ENCODE measurements at regions of chr17 and their contacts with region 1.

Region 1: DNA sequence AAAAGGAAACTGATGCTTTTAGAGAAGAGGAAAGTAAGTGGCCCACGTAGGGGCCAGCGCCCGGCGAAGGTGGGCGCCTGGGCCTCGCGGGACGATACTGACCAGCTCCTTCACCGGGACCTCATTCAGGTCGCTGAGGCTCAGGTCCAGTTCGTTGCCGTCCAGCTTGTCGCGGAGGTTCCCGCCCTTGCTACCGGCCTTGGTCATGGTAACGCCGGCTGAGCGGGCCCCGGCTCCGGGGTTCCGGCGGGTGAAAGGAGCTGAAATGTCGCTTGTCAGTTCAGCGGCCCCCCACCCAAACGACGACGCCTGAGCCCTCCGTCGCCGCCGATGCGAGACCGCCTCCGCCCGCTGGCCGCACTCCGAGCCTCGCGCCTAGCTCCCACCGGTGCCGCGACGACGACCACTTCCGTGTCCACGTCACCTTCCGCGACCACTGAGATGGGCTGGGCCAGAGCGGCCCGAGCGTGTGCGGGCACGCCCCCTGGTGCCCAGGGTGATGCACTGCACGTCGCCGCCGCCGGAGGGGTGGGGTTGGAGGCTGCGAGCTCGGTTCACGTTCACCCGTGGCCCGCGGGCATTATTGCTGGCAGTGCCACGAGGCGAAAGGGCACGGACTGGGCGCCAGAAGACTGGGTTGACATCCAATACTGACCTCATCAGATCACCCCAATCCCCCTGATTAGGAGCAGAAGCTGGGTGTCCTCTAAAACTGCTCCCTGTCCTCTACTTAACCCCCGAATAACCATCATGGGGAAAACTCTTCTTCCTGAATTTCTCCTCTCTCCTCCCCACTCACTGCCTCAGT is at the start of gene LRRC59:
- DNase-seq: peak; percentile 93
- H3K4me3 Mint-ChIP-seq: peak within 1 kb of the TSS; percentile 82
- H3K27ac Mint-ChIP-seq: peak within 1 kb of the TSS; percentile 88
- H3K4me1 Mint-ChIP-seq: peaks cover 30% of the 10 kb centered on the region
- H3K27me3 Mint-ChIP-seq: no peaks in the 10 kb centered on the region
- total RNA-seq, gene LRRC59: 67.1 to 68.9 TPM

Region 2: GRCh38 chr17:50200457-50201275 is 196.6 kb before region 1 on chr17:
- CTCF ChIA-PET with region 1: interaction called, 13 read pairs
- POLR2A ChIA-PET with region 1: no interaction called
- DNase-seq: peak; percentile 87
- H3K4me3 Mint-ChIP-seq: peak overlapping the region; percentile 67
- H3K27ac Mint-ChIP-seq: no peak overlapping the region
- H3K4me1 Mint-ChIP-seq: peaks cover 20% of the 10 kb centered on the region
- H3K27me3 Mint-ChIP-seq: peaks cover 60% of the 10 kb centered on the region

Region 3: GRCh38 chr17:50269477-50270434 is 127.6 kb before region 1 on chr17:
- CTCF ChIA-PET with region 1: no interaction called
- POLR2A ChIA-PET with region 1: no interaction called
- DNase-seq: peak; percentile 76
- H3K4me3 Mint-ChIP-seq: no peak overlapping the region
- H3K27ac Mint-ChIP-seq: no peak overlapping the region
- H3K4me1 Mint-ChIP-seq: peaks cover 18% of the 10 kb centered on the region
- H3K27me3 Mint-ChIP-seq: peaks cover 9% of the 10 kb centered on the region

Region 4: DNA sequence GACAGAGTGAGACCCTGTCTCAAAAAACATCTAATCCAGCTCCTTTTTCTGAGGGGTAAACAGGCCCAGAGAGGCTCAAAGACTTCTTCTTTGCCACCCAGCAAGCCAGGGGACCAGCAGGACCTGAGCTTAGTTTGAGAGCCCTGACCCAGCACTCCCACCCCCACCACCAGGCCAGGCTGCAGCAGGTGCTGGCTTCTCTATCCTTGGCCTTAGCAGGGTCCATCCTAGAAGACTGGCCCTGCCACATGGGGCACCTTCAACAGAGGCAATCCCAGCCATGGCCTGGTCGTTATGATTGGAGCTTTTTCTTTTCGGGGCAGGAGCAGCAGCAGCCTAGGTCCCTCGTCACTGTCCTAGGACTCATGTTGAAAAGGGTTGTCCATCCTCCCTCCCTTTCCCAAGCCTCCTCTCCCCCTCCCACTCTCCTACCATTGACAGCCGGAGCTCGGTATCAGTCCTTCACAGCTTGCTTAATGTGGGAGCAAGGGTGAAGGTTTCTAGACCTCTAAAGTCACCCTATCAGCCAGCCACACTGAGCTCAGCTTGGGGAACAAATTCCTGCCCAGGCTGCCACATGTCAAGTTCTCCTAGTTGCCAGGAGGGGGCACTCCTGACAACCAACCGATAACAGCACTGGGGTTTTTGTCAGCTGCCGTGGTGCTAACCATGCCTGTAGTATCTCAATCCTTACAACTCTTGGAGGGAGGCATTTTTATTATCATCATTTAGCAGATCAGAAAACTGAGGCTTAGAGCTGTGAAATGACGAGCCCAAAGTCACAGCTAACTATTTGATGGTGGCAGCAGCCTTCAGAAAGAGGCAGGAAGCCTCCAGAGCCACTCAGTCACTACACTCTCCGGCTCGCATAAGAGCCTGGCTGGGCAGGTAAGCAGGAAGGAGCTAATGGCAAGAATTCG is 35.5 kb before region 1 on chr17:
- CTCF ChIA-PET with region 1: interaction called, 75 read pairs
- POLR2A ChIA-PET with region 1: interaction called, 142 read pairs
- DNase-seq: peak; percentile 65
- H3K4me3 Mint-ChIP-seq: no peak overlapping the region
- H3K27ac Mint-ChIP-seq: peak overlapping the region; percentile 55
- H3K4me1 Mint-ChIP-seq: peaks cover 7% of the 10 kb centered on the region
- H3K27me3 Mint-ChIP-seq: no peaks in the 10 kb centered on the region

Region 5: DNA sequence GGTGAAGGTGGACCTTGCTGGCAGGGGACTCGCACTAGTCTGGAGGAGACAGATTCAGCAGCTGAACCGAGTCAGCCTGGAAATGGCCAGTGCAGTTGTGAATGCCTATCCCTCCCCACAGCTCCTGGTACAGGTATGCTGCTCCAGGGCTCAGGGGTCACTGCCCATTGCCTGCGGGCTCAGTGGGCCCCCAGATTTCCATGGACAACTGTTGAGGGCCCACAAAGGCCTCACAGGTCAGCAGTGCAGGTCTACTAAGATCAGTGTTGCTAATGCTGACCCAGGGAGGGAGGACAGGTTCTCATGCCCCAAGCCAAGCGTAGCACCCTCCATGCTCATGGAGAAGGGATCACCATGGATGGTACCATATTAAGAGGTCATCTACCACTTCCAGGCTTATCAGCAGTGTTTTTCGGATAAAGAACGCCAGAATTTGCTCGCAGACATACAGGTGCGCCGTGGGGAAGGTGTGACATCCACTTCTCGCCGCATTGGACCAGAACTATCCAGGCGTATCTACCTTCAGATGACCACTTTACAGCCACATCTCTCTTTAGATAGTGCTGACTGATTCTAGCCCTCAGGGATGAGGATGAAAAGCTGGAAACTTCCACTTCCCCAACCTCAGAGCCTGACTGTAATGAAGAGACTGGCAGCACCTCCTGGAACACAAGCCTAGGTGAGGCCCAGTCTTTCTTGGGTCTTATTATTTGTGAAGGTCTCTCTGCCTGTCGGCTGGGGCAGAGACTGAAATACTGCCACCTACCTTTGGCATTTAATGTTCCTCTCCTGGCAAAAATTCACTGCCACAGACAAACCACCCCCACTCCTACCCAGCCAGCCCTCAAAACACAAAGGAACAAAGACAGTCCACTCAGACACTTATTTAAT is 16.7 kb before region 1 on chr17:
- CTCF ChIA-PET with region 1: interaction called, 37 read pairs
- POLR2A ChIA-PET with region 1: interaction called, 142 read pairs
- DNase-seq: no peak
- H3K4me3 Mint-ChIP-seq: no peak overlapping the region
- H3K27ac Mint-ChIP-seq: no peak overlapping the region
- H3K4me1 Mint-ChIP-seq: peaks cover 3% of the 10 kb centered on the region
- H3K27me3 Mint-ChIP-seq: no peaks in the 10 kb centered on the region

Region 6: DNA sequence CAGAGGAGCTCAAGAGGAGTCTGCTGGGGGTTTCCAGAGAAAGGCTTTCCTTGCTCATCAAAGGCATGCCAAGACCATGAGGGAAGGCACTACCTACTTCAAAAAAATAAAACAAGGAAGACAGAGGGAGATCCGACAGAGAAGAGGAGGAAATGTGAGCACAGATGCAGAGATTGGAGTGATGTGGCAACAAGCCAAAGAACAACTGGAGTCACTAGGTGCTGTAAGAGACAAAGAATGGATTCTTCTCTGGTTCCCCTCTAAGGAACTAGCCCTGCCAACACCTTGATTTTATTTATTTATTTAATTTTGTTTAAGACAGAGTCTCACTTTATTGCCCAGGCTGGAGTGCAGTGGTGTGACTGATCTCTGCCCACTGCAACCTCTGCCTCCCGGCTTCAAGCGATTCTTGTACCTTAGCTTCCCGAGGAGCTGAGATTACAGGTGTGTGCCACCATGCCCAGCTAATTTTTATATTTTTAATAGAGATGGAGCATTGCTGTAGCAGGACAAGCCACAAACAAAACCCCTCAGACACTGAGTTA is 14.9 kb after region 1 on chr17:
- CTCF ChIA-PET with region 1: interaction called, 22 read pairs
- POLR2A ChIA-PET with region 1: interaction called, 24 read pairs
- DNase-seq: no peak
- H3K4me3 Mint-ChIP-seq: no peak overlapping the region
- H3K27ac Mint-ChIP-seq: no peak overlapping the region
- H3K4me1 Mint-ChIP-seq: no peaks in the 10 kb centered on the region
- H3K27me3 Mint-ChIP-seq: peaks cover 17% of the 10 kb centered on the region

Region 7: GRCh38 chr17:50431233-50431632 is 33.9 kb after region 1 on chr17:
- CTCF ChIA-PET with region 1: interaction called, 26 read pairs
- POLR2A ChIA-PET with region 1: interaction called, 28 read pairs
- DNase-seq: no peak
- H3K4me3 Mint-ChIP-seq: no peak overlapping the region
- H3K27ac Mint-ChIP-seq: no peak overlapping the region
- H3K4me1 Mint-ChIP-seq: peaks cover 19% of the 10 kb centered on the region
- H3K27me3 Mint-ChIP-seq: no peaks in the 10 kb centered on the region

Region 8: GRCh38 chr17:50527155-50527762 is 129.9 kb after region 1 on chr17:
- CTCF ChIA-PET with region 1: no interaction called
- POLR2A ChIA-PET with region 1: no interaction called
- DNase-seq: no peak
- H3K4me3 Mint-ChIP-seq: no peak overlapping the region
- H3K27ac Mint-ChIP-seq: no peak overlapping the region
- H3K4me1 Mint-ChIP-seq: no peaks in the 10 kb centered on the region
- H3K27me3 Mint-ChIP-seq: peaks cover 26% of the 10 kb centered on the region

Measured in activated CD4-positive, alpha-beta memory T cell treated with anti-CD3 and anti-CD28 coated beads, Interleukin-2, amount 10 ng/mL, durations not matched to agents 7 days and 5 days (primary cell).